A673 (cell line): ENCODE measurements at regions of chr2 and their contacts with region 1.

Region 1: GRCh38 chr2:189412330-189412953 is 28.8 kb upstream of the WDR75 start:
- DNase-seq: peak; percentile 66
- H3K4me3 ChIP-seq: no peak overlapping the region
- H3K27ac ChIP-seq: no peak overlapping the region
- H3K4me1 ChIP-seq: peaks cover 22% of the 10 kb centered on the region
- H3K27me3 ChIP-seq: no peaks in the 10 kb centered on the region
- CTCF ChIP-seq: peak; percentile 84

Region 2: GRCh38 chr2:187581125-187581896 is 1831.1 kb before region 1 on chr2:
- CTCF ChIA-PET with region 1: no interaction called
- POLR2A ChIA-PET with region 1: no interaction called
- intact Hi-C with region 1: loop called (anchors 5 kb)
- DNase-seq: peak; percentile 79
- H3K4me3 ChIP-seq: peak overlapping the region; percentile 28
- H3K27ac ChIP-seq: no peak overlapping the region
- H3K4me1 ChIP-seq: peaks cover 24% of the 10 kb centered on the region
- H3K27me3 ChIP-seq: no peaks in the 10 kb centered on the region
- CTCF ChIP-seq: peak; percentile 77

Region 3: GRCh38 chr2:188765522-188766470 is 646.6 kb before region 1 on chr2:
- CTCF ChIA-PET with region 1: no interaction called
- POLR2A ChIA-PET with region 1: no interaction called
- intact Hi-C with region 1: loop called (anchors 10 kb)
- DNase-seq: peak; percentile 87
- H3K4me3 ChIP-seq: no peak overlapping the region
- H3K27ac ChIP-seq: no peak overlapping the region
- H3K4me1 ChIP-seq: peaks cover 10% of the 10 kb centered on the region
- H3K27me3 ChIP-seq: no peaks in the 10 kb centered on the region
- CTCF ChIP-seq: peak; percentile 73

Region 4: GRCh38 chr2:188983427-188984064 is 428.9 kb before region 1 on chr2:
- CTCF ChIA-PET with region 1: no interaction called
- POLR2A ChIA-PET with region 1: no interaction called
- intact Hi-C with region 1: loop called (anchors 2 kb)
- DNase-seq: no peak
- H3K4me3 ChIP-seq: no peak overlapping the region
- H3K27ac ChIP-seq: no peak overlapping the region
- H3K4me1 ChIP-seq: peaks cover 5% of the 10 kb centered on the region
- H3K27me3 ChIP-seq: no peaks in the 10 kb centered on the region
- CTCF ChIP-seq: 0 out of 2 replicates have a peak, but pooled peaks have one; percentile 22

Region 5: DNA sequence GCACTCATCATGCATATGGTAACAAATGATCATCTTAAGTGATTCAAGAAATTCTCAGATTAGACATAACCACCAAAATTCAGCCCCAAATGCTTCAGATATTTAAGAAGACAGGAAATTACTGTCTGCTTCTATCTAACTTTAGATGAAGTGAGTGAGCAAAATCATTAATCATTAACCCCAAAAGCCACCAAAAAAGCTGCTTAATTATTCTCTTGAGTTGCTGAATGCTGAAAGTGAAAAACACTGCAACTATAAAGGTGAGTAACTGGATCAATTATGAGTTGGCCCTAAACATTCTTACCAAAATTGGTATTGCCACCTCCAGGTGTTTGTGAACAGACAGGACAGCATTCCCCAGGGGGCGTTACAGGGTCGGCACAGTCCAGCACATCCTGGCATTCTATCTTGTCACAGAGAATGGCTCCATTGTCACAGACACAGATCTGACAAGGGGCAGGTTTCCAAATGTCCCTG is 302.5 kb before region 1 on chr2:
- CTCF ChIA-PET with region 1: no interaction called
- POLR2A ChIA-PET with region 1: no interaction called
- intact Hi-C with region 1: loop called (anchors 5 kb)
- DNase-seq: no peak
- H3K4me3 ChIP-seq: no peak overlapping the region
- H3K27ac ChIP-seq: no peak overlapping the region
- H3K4me1 ChIP-seq: peaks cover 2% of the 10 kb centered on the region
- H3K27me3 ChIP-seq: no peaks in the 10 kb centered on the region
- CTCF ChIP-seq: no peak